ACHN (cell line): ENCODE measurements at regions of chr13 and their contacts with region 1.

Region 1: DNA sequence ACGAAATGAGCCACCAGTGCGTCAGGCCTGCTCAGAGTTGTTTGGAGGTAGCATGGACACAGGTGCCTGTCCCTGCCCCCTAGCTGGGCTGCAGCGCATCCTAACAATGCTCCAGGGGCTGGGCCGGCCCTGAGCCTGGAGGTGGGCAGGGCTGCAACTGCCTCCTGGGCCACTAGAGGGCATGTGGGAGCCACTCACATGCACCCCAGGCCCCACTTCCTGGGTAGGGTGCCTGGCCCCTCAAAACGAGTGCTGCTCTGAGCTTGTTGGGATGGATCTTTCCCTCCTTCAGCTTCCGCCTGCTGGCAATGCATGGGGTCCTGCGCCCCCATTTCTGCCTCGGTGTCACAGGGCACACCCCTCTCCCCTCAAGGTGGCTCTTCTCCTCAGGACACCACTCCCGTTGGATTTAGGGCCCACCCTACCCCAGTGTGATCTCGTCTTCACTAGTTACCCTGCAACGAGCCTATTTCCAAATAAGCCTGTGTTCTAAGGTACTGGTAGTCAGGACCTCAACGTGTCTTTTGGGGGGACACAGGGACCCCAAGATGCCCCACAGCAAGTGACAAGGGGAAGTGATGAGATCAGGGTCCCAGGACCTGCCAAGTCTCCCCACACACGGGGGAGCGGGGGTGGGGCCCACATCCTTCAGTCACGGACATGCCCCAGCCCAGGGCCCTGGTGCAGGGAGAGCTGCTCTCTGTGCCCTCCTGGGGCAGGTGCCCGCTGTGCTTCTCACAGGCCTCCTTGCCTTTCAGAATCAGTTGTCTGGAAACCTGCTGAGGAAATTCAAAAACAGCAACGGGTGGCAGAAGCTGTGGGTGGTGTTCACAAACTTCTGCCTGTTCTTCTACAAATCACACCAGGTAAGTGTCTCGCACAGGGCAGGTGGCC is 131.3 kb downstream of the STK24 start:
- DNase-seq: peak; percentile 53

Region 2: DNA sequence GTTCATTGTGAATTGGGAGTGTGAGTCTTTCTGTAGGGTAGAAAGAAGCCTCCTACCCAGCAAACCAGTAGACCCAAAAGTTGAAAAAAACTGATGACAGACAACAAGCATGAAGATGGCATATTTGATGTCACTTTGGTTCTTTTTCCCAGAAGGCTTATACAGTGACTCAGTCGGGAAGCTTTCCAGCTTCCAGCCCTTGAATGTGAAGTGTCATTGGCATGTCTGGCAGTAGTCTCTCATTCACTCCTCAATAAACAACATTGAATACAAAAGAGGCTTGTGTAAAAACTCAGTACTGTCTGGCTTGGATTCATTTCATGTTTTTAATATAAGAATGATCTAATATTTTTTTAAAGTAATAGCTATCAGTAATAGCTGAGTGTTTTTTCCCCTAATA is 423.4 kb before region 1 on chr13:
- in situ Hi-C with region 1: loop called (anchors 25 kb)
- DNase-seq: peak; percentile 35

Region 3: DNA sequence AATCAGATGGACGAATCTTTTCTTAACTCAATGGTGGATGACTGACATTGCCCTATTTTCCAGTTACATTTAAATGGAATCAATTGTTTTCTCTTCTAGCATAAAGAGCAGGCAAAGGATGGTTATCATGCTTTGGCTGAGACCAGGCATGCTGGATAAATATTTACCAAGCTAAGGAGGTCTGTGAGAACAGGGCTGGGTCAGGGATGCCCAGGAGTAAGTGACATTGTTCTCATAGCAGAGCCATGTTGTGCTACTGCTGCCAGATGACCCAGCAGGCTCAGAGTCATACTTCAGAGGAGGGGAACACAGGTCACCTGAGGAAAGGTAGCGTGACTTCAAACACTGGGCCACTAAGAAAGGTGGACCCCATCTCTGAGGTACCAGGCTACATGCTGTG is 152.5 kb before region 1 on chr13:
- in situ Hi-C with region 1: no loop called
- DNase-seq: no peak